Common myeloid progenitor, CD34-positive (primary cell): ENCODE measurements at regions of chr4 and their contacts with region 1.

Region 1: DNA sequence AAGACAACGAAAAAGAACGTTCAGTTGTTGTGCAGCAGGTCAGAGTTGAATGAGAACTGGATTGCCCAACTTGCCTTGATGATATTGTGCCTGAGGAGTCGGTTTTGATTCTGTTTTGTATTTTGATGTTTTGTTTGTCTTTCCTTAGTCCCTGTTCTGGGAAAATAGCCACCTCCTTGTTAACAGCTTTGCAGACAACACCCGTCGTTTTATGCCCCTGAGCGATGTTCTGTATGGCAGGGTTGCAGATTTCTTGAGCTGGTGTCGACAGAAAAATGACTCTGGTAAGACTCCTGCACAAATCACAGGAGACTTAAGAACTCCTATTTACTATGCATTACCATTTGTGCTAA is 4.5 kb downstream of the BST1 start:
- DNase-seq: no peak
- H3K4me3 ChIP-seq: no peak overlapping the region
- H3K27ac ChIP-seq: no peak overlapping the region
- H3K4me1 ChIP-seq: peaks cover 3 to 6% (median 4%) of the 10 kb centered on the region in 4 experiments
- H3K27me3 ChIP-seq: no peaks in the 10 kb centered on the region

Region 2: DNA sequence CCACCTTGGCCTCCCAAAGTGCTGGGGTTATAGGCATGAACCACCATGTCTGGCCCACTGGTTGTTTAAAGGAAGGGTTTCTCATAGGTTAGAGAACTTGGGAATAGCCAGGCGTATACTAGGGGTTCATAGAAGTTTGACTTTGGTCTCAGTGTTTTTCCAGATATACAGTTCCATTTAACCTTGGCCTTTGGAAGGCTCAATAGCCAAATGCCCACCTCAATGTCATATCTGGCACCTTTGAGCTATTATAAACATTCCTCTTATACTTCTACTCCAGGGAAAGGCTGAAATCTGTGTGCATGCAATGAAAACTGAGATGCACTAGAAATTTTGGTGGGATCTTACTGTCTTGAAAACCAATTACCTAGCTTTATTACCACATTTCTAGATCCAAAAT is 424.0 kb after region 1 on chr4:
- CTCF ChIA-PET with region 1: no interaction called
- POLR2A ChIA-PET with region 1: interaction called, 11 read pairs
- DNase-seq: no peak
- H3K4me3 ChIP-seq: no peak overlapping the region
- H3K27ac ChIP-seq: no peak overlapping the region
- H3K4me1 ChIP-seq: no peaks in the 10 kb centered on the region
- H3K27me3 ChIP-seq: no peaks in the 10 kb centered on the region